HEK293 (cell line): ENCODE measurements at regions of chr14 and their contacts with region 1.

Region 1: DNA sequence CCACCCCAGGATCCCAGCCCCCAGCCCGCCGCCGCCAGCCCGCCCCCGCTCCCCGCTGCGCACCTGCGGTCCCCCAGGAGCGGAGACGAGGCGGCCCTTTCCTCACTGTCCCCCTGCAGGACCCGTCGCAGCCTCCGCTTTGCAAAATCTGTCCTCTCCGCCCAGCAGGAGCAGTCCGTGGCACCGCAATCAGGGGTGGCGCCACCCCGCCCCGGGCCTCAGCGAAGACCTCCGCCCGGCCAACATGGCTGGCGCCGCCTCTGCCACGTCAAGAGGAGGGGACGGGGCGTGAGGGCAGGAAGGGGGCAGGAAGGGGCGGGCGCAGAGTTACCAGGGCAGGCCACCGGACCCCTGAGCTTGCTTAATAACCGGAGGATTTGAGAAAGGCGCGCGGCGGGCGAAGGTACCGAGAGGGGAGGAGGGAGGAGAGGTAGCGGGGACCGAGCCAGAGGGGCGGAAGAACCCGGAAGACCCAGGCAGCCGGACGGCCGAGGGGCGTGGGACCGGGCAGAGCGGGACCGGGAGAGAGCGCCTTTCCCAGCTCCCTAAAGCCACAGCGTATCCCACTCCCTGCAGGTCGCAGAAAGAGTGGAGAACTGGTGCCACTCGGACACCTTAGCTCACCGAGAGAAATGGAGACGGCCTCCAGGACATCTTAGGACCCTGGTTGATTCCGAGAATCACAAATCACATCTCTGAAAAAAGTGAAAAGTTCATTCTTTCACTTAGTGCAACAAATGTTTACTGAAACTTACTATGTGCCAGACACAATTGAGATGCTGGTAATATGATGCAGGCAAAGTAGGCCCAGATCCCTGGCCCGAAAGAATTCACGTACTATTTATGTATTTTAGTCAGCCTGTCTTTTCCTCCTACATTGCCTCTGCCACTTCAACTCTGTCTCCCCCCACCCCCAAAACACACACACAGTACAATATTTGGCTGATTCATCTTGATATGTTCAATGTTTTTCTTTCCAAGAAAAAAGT is at the start of gene SEC23A:
- H3K4me3 ChIP-seq: peak within 1 kb of the TSS; percentile 93
- H3K27ac ChIP-seq: peak within 1 kb of the TSS; percentile 77
- H3K4me1 ChIP-seq: no peaks in the 10 kb centered on the region
- CTCF ChIP-seq: peak; percentile 76

Region 2: DNA sequence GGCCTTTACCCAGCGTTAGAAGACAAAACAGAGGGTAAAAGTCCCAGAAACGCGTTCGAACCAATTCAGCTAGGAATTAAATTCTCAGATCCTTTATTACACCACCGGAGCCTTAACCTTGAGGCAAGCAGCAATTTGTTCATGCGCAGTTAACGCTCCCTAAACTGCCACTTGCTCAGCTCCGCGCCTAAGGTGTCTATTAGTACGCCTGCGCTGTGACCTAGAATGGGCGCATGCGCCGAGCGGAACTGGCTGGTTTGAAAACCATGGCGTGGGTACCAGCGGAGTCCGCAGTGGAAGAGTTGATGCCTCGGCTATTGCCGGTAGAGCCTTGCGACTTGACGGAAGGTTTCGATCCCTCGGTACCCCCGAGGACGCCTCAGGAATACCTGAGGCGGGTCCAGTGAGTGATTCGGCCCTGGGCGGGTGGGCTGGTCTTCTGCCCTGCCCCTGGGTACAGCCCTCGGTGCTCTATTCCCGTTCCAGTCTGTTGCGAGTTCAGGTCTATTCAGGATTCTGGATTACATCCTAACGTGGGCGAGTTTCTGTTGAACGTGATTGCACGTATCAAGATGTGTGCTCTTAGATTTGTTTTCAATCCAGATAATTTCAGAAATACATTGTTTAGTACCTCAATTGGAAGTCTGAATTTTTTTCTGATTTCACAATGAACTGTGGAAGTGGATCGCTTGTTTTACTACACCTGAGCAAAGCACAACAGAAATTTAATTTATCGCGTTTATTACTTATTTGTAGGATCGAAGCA is 11.0 kb after region 1 on chr14 and contains the start of gene GEMIN2:
- CTCF ChIA-PET with region 1: interaction called, 5 read pairs
- POLR2A ChIA-PET with region 1: interaction called, 76 read pairs
- H3K4me3 ChIP-seq: peak within 1 kb of the TSS; percentile 87
- H3K27ac ChIP-seq: peak within 1 kb of the TSS; percentile 28
- H3K4me1 ChIP-seq: no peaks in the 10 kb centered on the region
- CTCF ChIP-seq: no peak

Region 3: GRCh38 chr14:39395555-39396254 is 292.4 kb after region 1 on chr14:
- CTCF ChIA-PET with region 1: interaction called, 12 read pairs
- POLR2A ChIA-PET with region 1: no interaction called
- H3K4me3 ChIP-seq: no peak overlapping the region
- H3K27ac ChIP-seq: no peak overlapping the region
- H3K4me1 ChIP-seq: no peaks in the 10 kb centered on the region
- CTCF ChIP-seq: no peak